A673 (cell line): ENCODE measurements at regions of chrX and their contacts with region 1.

Region 1: DNA sequence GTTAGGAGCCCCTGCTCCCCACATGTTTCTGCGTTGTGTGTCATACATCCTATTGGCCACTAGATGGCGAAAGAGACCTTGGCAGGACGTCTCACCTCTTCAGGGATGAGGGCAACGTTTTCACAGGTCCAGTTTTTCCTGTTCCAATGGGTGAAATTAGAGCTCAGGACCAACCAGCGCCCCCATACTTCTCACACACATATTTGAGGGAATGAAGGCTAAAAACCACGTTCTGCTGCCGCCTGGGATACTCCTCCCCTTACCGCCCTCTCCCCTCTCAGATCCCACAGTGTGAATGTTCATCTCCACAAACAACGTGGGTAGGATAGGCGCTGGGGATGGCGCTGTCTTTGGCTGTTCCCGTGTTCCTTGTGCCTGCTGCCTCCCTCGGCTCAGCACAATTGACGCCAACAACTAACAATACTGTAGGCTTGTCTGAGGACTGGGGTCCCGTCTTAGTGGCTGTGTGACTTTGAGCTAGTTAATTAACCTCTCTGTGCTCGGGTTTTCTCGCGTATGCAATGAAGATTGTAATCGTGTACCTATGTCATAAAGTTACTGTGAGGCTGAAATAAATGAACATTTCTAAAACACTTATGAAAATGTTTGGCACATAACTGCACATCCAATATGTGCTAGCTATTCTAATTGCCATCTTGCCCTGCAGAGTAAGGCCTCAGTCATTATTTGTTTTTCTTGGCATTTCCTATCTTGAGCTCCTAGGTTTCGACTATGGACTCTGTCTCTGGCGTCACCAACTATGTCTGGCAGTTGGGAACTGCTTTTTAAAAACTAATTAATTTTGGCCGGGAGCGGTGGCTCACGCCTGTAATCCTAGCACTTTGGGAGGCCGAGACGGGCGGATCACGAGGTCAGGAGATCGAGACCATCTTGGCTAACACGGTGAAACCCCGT is 181.3 kb upstream of the STK26 start:
- DNase-seq: peak; percentile 69
- H3K4me3 ChIP-seq: no peak overlapping the region
- H3K27ac ChIP-seq: no peak overlapping the region
- H3K4me1 ChIP-seq: no peaks in the 10 kb centered on the region
- H3K27me3 ChIP-seq: peaks cover 19% of the 10 kb centered on the region
- CTCF ChIP-seq: peak; percentile 82

Region 2: GRCh38 chrX:132071260-132071659 is 229.5 kb after region 1 on chrX:
- CTCF ChIA-PET with region 1: interaction called, 3 read pairs
- POLR2A ChIA-PET with region 1: no interaction called
- intact Hi-C with region 1: loop called (anchors 5 kb)
- DNase-seq: peak; percentile 15
- H3K4me3 ChIP-seq: no peak overlapping the region
- H3K27ac ChIP-seq: no peak overlapping the region
- H3K4me1 ChIP-seq: no peaks in the 10 kb centered on the region
- H3K27me3 ChIP-seq: peaks cover 5% of the 10 kb centered on the region
- CTCF ChIP-seq: peak; percentile 47

Region 3: GRCh38 chrX:132375934-132376333 is 534.2 kb after region 1 on chrX:
- CTCF ChIA-PET with region 1: no interaction called
- POLR2A ChIA-PET with region 1: no interaction called
- intact Hi-C with region 1: loop called (anchors 10 kb)
- DNase-seq: peak; percentile 15
- H3K4me3 ChIP-seq: no peak overlapping the region
- H3K27ac ChIP-seq: no peak overlapping the region
- H3K4me1 ChIP-seq: no peaks in the 10 kb centered on the region
- H3K27me3 ChIP-seq: peaks cover 19% of the 10 kb centered on the region
- CTCF ChIP-seq: peak; percentile 30